ENCODE measurements at regions of chr20 and their contacts with region 1.

Region 1: GRCh38 chr20:44217342-44218092 is 6.9 kb upstream of the OSER1 start:
- DNase-seq: peak; percentile 50
- H3K4me3 Mint-ChIP-seq: peak overlapping the region; percentile 73
- H3K27ac Mint-ChIP-seq: peak overlapping the region; percentile 45
- H3K4me1 Mint-ChIP-seq: peaks cover 41% of the 10 kb centered on the region
- H3K27me3 Mint-ChIP-seq: peaks cover 3% of the 10 kb centered on the region

Region 2: GRCh38 chr20:44253528-44253927 is 36.0 kb after region 1 on chr20:
- intact Hi-C with region 1: no loop called
- DNase-seq: no peak
- H3K4me3 Mint-ChIP-seq: no peak overlapping the region
- H3K27ac Mint-ChIP-seq: no peak overlapping the region
- H3K4me1 Mint-ChIP-seq: no peaks in the 10 kb centered on the region
- H3K27me3 Mint-ChIP-seq: peaks cover 6% of the 10 kb centered on the region

Region 3: DNA sequence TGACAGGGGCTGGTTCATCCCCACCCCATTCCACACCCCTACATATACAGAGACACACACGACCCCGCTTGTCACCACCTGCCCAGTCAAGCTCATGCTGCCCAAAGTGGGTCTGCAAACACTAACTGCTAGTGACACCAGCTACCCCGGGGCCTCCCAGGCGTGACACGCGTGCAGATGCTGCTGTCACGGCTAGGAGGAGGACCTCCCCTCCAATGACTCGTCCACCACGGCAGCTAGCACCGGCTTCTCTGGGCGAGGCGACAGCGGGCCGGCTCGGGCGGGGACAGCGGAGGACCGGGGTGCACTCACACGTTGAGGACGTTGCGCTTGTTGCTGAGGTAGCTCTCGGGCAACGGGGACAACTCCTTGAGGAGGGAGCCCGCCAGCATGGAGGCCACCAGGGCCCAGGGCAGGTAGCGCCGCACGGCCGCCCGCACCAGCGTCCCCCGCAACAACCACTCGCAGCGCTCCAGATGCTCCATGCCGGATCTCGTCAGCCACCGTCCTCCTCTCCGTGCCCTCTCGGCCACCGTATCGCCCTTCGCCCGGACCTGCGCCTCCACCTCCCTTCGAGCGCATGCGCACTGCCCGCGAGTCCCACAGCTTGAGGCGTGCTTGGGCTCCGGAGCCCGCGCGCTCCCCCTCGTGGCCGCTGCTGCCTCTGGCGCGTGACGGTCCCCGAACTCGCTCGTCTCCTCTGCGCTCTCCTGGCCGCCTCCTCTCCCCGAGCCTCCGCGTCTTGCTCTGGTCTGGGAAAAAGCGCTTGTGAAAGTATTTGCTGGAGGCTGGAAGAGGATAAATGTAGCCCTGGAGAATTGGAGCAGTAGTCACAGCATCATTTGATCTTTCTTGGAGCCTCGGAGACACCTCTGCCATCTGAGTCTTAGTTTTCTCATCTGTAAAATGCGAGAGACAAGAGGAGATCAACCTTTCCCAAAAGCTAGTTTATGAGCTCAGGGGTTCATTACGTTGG is 93.4 kb after region 1 on chr20 and contains the start of gene FITM2:
- intact Hi-C with region 1: loop called (anchors 1 kb)
- DNase-seq: peak; percentile 97
- H3K4me3 Mint-ChIP-seq: peak within 1 kb of the TSS; percentile 86
- H3K27ac Mint-ChIP-seq: peak within 1 kb of the TSS; percentile 87
- H3K4me1 Mint-ChIP-seq: peaks cover 18% of the 10 kb centered on the region
- H3K27me3 Mint-ChIP-seq: peaks cover 4% of the 10 kb centered on the region
- total RNA-seq, gene FITM2: 2.2 TPM in 2 replicates

Region 4: GRCh38 chr20:44388466-44389023 is 171.0 kb after region 1 on chr20:
- intact Hi-C with region 1: loop called (anchors 1 kb)
- DNase-seq: peak; percentile 57
- H3K4me3 Mint-ChIP-seq: peak overlapping the region; percentile 17
- H3K27ac Mint-ChIP-seq: no peak overlapping the region
- H3K4me1 Mint-ChIP-seq: peaks cover 5% of the 10 kb centered on the region
- H3K27me3 Mint-ChIP-seq: peaks cover 6% of the 10 kb centered on the region

Region 5: DNA sequence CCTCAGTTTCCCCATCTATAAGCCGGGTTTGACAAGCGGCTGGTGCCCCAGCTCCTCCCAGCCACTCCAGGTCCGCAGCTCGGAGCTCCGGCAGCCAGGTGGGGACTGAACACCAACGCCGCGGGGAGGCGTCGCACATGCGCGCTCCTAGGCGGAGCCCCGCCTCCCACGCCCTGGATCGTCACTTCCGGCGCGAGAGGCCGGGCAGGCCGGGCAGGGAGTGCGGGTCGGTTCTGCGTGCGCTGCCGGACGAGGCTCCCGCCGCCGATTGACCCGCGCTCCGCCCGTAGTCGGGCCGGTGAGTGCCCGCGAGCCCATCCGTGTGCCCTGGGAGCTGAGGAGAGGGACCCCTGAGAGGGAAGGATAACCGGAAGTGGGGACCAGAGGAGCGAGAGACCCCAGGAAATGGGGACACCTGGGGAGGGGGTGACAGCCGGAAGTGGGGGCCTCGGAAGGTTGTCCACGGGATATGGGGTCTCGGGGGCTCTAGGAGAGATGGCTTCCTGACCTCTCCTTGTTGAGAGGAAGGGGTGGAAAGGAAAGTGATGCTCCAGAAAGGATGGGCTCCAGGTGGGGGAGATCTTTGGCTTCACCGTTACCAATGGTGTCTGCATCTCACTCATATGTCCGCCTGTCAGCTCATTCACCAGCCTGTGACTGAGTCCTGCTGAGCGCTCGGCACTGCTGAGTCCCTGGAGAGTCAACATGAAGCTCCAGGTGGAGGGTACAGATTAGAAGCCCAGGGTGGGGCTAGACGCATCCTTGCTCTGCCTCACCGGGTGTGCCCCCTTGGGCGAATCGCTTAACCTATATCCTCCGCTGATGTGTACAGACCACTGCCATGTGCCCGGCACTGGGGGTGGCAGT is 258.4 kb after region 1 on chr20 and contains the start of gene TTPAL:
- intact Hi-C with region 1: loop called (anchors 1 kb)
- DNase-seq: peak; percentile 90
- H3K4me3 Mint-ChIP-seq: peak within 1 kb of the TSS; percentile 95
- H3K27ac Mint-ChIP-seq: peak within 1 kb of the TSS; percentile 93
- H3K4me1 Mint-ChIP-seq: peaks cover 20% of the 10 kb centered on the region
- H3K27me3 Mint-ChIP-seq: peaks cover 3% of the 10 kb centered on the region
- total RNA-seq, gene TTPAL: 22.9 and 24.7 TPM in 2 replicates

Region 6: GRCh38 chr20:44683263-44684046 is 465.9 kb after region 1 on chr20:
- intact Hi-C with region 1: loop called (anchors 1 kb)
- DNase-seq: peak; percentile 25
- H3K4me3 Mint-ChIP-seq: no peak overlapping the region
- H3K27ac Mint-ChIP-seq: no peak overlapping the region
- H3K4me1 Mint-ChIP-seq: peaks cover 17% of the 10 kb centered on the region
- H3K27me3 Mint-ChIP-seq: no peaks in the 10 kb centered on the region

Region 7: DNA sequence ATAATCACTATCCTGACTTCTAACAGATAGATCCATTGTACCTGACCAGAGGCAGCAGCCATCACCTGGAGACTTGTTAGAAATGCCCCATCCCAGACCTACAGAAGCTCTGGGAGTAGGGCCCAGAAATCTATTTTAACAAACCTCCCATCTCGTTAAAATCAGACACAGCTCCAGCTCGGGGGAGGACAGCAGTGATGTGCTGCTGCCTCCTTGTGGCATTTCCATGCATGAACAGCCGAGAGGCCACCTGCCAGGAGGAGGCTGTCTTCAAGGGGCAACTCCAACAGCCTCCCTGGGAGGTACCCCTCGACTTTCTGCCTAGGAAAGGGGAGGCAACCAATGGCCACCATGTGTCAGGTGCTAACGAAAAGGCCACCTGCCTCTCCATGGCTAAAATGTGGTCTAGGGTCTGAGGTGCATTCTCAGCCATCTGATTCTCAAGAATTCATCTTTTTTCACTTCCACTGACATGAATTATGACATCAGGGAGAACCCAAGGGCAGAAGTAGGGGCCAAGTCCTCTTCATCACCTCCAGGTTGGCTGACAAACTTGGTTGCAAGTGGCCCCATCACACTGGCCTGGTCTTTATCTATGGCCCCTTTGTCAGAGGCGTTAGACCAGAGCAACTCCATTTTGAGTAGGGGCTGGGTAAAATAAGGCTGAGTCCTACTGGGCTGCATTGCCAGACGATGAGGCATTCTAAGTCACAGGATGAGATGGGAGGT is 516.0 kb after region 1 on chr20:
- intact Hi-C with region 1: loop called (anchors 5 kb)
- DNase-seq: peak; percentile 45
- H3K4me3 Mint-ChIP-seq: no peak overlapping the region
- H3K27ac Mint-ChIP-seq: no peak overlapping the region
- H3K4me1 Mint-ChIP-seq: peaks cover 42% of the 10 kb centered on the region
- H3K27me3 Mint-ChIP-seq: peaks cover 2% of the 10 kb centered on the region

Region 8: DNA sequence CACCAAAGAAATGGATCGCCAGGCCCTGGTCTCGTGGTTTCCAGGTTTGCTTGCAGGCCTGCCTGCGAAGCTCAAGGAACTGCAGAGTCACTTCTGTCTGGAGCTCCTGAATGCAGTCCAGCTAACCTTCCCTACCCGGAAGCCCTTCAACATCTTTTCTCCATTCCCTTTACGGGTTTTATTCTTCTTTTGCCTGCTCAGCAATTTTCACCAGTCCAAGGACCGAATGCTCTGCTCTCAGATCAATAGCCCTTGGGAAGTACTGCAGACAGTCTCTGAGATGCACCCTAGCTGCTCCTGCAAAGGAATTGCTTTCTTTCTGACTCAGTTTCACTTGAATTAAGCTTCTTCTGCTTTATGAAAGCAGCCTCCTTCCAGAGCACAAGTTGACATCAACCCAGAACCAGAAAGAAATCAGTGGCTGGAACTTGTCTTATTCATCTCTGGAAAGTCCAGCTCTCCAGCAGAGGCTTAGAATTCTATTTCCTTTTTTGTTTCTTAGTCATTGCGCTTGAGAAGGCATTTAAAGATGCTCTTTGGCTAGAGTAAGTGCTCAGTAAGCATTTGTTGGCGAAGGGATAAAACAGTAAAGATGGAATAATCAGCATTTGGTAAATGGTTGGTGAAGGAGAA is 649.3 kb after region 1 on chr20:
- intact Hi-C with region 1: loop called (anchors 5 kb)
- DNase-seq: no peak
- H3K4me3 Mint-ChIP-seq: peak overlapping the region; percentile 35
- H3K27ac Mint-ChIP-seq: no peak overlapping the region
- H3K4me1 Mint-ChIP-seq: peaks cover 14% of the 10 kb centered on the region
- H3K27me3 Mint-ChIP-seq: peaks cover 16% of the 10 kb centered on the region

Measured in activated T-helper 1 cell treated with anti-CD3 and anti-CD28 coated beads, Interleukin-12 subunit alpha, Interleukin-12 subunit beta, Interleukin-2, Interleukin-4 antibody, amounts not matched to agents 30 ng/mL and 10 ng/mL and 1 ng/mL, durations not matched to agents 14 hours and 24 hours and 36 hours (primary cell).